IMR-90 (cell line): ENCODE measurements at regions of chr15 and their contacts with region 1.

Region 1: GRCh38 chr15:95041299-95041698 is 809.9 kb downstream of the MCTP2 start:
- DNase-seq: no peak
- ATAC-seq: no peak
- H3K4me3 ChIP-seq: no peak overlapping the region
- H3K27ac ChIP-seq: no peak overlapping the region
- H3K4me1 ChIP-seq: no peaks in the 10 kb centered on the region
- H3K27me3 ChIP-seq: no peaks in the 10 kb centered on the region
- CTCF ChIP-seq: no peak
- POLR2A ChIP-seq: no peak
- RAD21 ChIP-seq: no peak

Region 2: GRCh38 chr15:94910166-94910565 is 131.1 kb before region 1 on chr15:
- CTCF ChIA-PET with region 1: no interaction called
- POLR2A ChIA-PET with region 1: no interaction called
- dilution Hi-C with region 1: no loop called
- in situ Hi-C with region 1: no loop called
- intact Hi-C with region 1: no loop called
- DNase-seq: no peak
- ATAC-seq: no peak
- H3K4me3 ChIP-seq: no peak overlapping the region
- H3K27ac ChIP-seq: no peak overlapping the region
- H3K4me1 ChIP-seq: no peaks in the 10 kb centered on the region
- H3K27me3 ChIP-seq: no peaks in the 10 kb centered on the region
- CTCF ChIP-seq: no peak
- POLR2A ChIP-seq: no peak
- RAD21 ChIP-seq: no peak

Region 3: DNA sequence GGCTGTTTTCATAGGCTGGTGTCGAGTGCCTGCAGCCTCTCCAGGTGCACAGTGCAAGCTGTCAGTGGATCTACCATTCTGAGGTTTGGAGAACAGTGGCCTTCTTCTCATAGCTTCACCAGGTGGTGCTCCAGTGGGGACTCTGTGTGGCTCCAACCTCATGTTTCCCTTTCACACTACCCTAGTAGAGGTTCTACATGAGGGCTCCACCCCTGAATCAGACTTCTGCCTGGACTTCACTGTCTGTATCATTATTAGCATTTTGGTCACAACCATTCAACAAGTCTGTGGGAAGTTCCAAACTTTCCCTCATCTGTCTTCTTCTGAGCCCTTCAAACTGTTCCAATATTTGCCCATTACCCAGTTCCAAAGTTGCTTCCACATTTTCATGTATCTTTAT is 193.7 kb after region 1 on chr15:
- CTCF ChIA-PET with region 1: no interaction called
- POLR2A ChIA-PET with region 1: no interaction called
- dilution Hi-C with region 1: no loop called
- in situ Hi-C with region 1: no loop called
- intact Hi-C with region 1: loop called (anchors 5 kb)
- DNase-seq: no peak
- ATAC-seq: no peak
- H3K4me3 ChIP-seq: no peak overlapping the region
- H3K27ac ChIP-seq: no peak overlapping the region
- H3K4me1 ChIP-seq: no peaks in the 10 kb centered on the region
- H3K27me3 ChIP-seq: no peaks in the 10 kb centered on the region; the same call in 1 of the 2 replicates
- CTCF ChIP-seq: no peak
- POLR2A ChIP-seq: no peak
- RAD21 ChIP-seq: no peak

Region 4: DNA sequence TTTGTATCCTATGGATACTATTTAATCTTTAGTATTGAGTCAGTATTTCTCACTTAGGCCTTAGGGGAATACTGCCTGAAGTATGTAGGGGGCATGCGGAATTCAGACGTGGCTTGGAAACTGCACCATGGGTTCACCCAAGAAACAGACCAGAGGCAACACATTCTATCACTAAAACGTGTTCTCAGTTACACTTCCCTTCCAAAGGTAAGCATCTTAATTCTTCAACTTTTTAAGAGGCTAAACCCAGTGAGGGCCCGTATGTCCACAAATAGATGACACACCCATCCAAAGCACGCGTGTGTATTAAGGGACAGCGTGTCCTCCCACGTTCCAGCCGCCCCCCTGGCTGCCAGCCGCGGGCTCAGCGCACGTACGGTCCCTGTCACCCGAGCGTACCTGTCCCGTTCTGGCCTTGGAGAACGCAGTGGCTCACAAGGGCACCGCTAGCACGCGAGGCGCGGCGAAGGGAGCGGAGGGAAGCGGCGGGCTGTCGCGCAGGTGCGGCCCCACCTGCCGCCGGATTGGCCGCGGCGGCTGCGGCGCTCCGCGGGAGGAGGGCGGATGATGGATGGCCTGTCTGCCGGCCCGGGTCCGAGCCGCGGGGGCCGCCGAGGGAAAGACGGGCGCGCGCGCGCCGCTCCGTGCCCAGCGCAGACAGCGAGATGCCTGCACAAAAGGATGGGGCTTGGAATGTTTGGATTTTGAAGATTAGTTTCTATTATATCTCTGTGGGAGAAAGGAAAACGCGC is 285.3 kb after region 1 on chr15:
- CTCF ChIA-PET with region 1: no interaction called
- POLR2A ChIA-PET with region 1: no interaction called
- dilution Hi-C with region 1: no loop called
- in situ Hi-C with region 1: no loop called
- intact Hi-C with region 1: no loop called
- DNase-seq: no peak
- ATAC-seq: peak; percentile 46
- H3K4me3 ChIP-seq: peak overlapping the region; percentile 51
- H3K27ac ChIP-seq: no peak overlapping the region
- H3K4me1 ChIP-seq: peaks cover 2% of the 10 kb centered on the region; the same call in 1 of the 2 replicates
- H3K27me3 ChIP-seq: peaks cover 2% of the 10 kb centered on the region; the same call in 1 of the 2 replicates
- CTCF ChIP-seq: no peak
- POLR2A ChIP-seq: no peak
- RAD21 ChIP-seq: no peak